ENCODE measurements at regions of chr1 and their contacts with region 1.

Region 1: GRCh38 chr1:171801487-171801891 is 20.0 kb downstream of the METTL13 start:
- DNase-seq: peak in 1 of 2 donors; percentile 58
- ATAC-seq: no peak
- H3K4me3 ChIP-seq: no peak overlapping the region
- H3K4me3 Mint-ChIP-seq: no peak overlapping the region
- H3K27ac ChIP-seq: no peak overlapping the region
- H3K27ac Mint-ChIP-seq: no peak overlapping the region
- H3K4me1 ChIP-seq: peaks cover 13% of the 10 kb centered on the region
- H3K4me1 Mint-ChIP-seq: peaks cover 16 to 17% of the 10 kb centered on the region in 2 donors
- H3K27me3 ChIP-seq: no peaks in the 10 kb centered on the region
- H3K27me3 Mint-ChIP-seq: no peaks in the 10 kb centered on the region
- CTCF ChIP-seq: peak; percentile 75

Region 2: DNA sequence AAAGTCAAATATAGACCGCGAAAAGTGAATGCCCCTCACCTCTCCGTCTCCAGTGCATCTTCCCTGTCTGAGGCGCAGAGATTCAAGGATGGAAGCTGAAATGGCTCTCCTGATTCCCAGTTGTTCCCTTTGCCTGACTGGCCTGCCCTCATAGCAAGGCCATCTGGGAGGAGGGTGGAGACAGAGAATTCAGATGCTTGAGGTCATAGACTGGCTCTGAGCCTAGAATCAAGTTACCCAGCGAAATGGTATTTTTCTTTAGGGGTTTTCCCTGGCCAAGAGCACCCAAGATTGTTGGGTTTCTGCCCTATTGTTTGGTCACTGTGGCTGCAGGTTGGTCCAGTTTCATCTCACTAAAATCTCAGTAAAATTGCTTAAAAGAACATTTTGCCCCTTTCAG is 12.8 kb before region 1 on chr1:
- intact Hi-C with region 1: no loop called
- DNase-seq: no peak
- ATAC-seq: no peak
- H3K4me3 ChIP-seq: no peak overlapping the region
- H3K4me3 Mint-ChIP-seq: no peak overlapping the region
- H3K27ac ChIP-seq: no peak overlapping the region
- H3K27ac Mint-ChIP-seq: no peak overlapping the region
- H3K4me1 ChIP-seq: peaks cover 7% of the 10 kb centered on the region
- H3K4me1 Mint-ChIP-seq: peaks cover 19 to 34% of the 10 kb centered on the region in 2 donors
- H3K27me3 ChIP-seq: no peaks in the 10 kb centered on the region
- H3K27me3 Mint-ChIP-seq: no peaks in the 10 kb centered on the region
- CTCF ChIP-seq: no peak

Region 3: GRCh38 chr1:171841050-171841940 is 39.8 kb after region 1 on chr1 and contains the start of gene DNM3:
- intact Hi-C with region 1: loop called (anchors 5 kb)
- DNase-seq: peak; percentile 87 to 88
- ATAC-seq: peak; percentile 95 to 96 (median 95)
- H3K4me3 ChIP-seq: peak within 1 kb of the TSS; percentile 85
- H3K4me3 Mint-ChIP-seq: peak within 1 kb of the TSS; percentile 93
- H3K27ac ChIP-seq: peak within 1 kb of the TSS; percentile 25
- H3K27ac Mint-ChIP-seq: peak within 1 kb of the TSS; percentile 76 to 85
- H3K4me1 ChIP-seq: peaks cover 18% of the 10 kb centered on the region
- H3K4me1 Mint-ChIP-seq: peaks cover 18 to 24% of the 10 kb centered on the region in 2 donors
- H3K27me3 ChIP-seq: peaks cover 30% of the 10 kb centered on the region
- H3K27me3 Mint-ChIP-seq: peaks cover 19 to 46% of the 10 kb centered on the region in 2 donors
- CTCF ChIP-seq: no peak
- total RNA-seq, gene DNM3: 2.5 to 3.3 (median 2.8) TPM

Region 4: GRCh38 chr1:171984850-171985485 is 183.5 kb after region 1 on chr1:
- intact Hi-C with region 1: loop called (anchors 1 kb)
- DNase-seq: peak in 1 of 2 donors; percentile 61
- ATAC-seq: peak in 2 of 3 donors; percentile 47 to 60
- H3K4me3 ChIP-seq: no peak overlapping the region
- H3K4me3 Mint-ChIP-seq: no peak overlapping the region
- H3K27ac ChIP-seq: no peak overlapping the region
- H3K27ac Mint-ChIP-seq: no peak overlapping the region
- H3K4me1 ChIP-seq: no peaks in the 10 kb centered on the region
- H3K4me1 Mint-ChIP-seq: no peaks in the 10 kb centered on the region
- H3K27me3 ChIP-seq: no peaks in the 10 kb centered on the region
- H3K27me3 Mint-ChIP-seq: peaks cover 0 to 5% of the 10 kb centered on the region in 2 donors
- CTCF ChIP-seq: peak; percentile 79